ENCODE measurements at regions of chr1 and their contacts with region 1.

Region 1: GRCh38 chr1:100459358-100460114 is 78.4 kb upstream of the GPR88 start:
- DNase-seq: peak; percentile 89
- H3K4me3 Mint-ChIP-seq: no peak overlapping the region
- H3K27ac Mint-ChIP-seq: peak overlapping the region; percentile 22
- H3K4me1 Mint-ChIP-seq: peaks cover 34% of the 10 kb centered on the region
- H3K27me3 Mint-ChIP-seq: no peaks in the 10 kb centered on the region

Region 2: GRCh38 chr1:99808391-99809115 is 651.0 kb before region 1 on chr1:
- intact Hi-C with region 1: loop called (anchors 1 kb)
- DNase-seq: peak; percentile 85
- H3K4me3 Mint-ChIP-seq: peak overlapping the region; percentile 22
- H3K27ac Mint-ChIP-seq: no peak overlapping the region
- H3K4me1 Mint-ChIP-seq: peaks cover 18% of the 10 kb centered on the region
- H3K27me3 Mint-ChIP-seq: peaks cover 20% of the 10 kb centered on the region

Region 3: DNA sequence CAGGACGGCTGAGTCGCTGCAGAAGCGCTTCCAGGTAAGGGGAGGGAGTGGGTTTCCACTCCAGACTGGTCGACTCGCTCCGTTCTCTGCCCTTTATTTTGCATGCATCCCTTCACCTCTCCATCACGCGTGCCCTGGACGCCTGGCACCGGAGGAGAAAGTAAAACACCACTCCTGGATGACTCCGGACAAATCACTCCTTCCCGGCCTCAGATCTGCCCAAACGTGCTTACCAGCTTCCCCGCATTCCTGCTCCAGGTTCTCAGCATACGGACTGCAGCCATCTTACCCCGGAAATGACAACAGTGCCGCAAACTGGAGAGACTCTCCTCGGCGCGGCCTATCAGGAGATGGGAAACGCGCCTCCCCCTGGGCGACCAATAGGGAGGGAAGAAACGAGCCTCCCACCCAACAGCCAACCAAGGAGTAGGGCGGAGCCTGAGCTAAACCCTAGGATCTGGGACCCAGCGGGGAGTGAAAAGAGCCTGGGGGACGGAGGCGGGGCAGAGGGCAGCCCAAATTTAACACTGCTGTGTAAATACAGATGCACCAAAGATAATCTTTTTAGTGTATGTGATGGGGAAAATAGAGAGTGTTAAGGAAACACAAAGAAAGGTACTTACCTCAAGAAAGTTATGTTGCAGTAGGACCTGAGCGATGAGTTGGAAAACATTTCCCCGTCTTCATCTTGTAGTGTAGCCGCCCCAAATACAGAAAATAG is 209.8 kb before region 1 on chr1 and contains the start of gene DBT:
- intact Hi-C with region 1: loop called (anchors 5 kb)
- DNase-seq: peak; percentile 98
- H3K4me3 Mint-ChIP-seq: no peak within 1 kb of the TSS
- H3K27ac Mint-ChIP-seq: no peak within 1 kb of the TSS
- H3K4me1 Mint-ChIP-seq: peaks cover 11% of the 10 kb centered on the region
- H3K27me3 Mint-ChIP-seq: peaks cover 8% of the 10 kb centered on the region
- total RNA-seq, gene DBT: 11.9 and 12.4 TPM in 2 replicates

Region 4: GRCh38 chr1:100279954-100280682 is 179.4 kb before region 1 on chr1:
- intact Hi-C with region 1: loop called (anchors 5 kb)
- DNase-seq: no peak
- H3K4me3 Mint-ChIP-seq: no peak overlapping the region
- H3K27ac Mint-ChIP-seq: no peak overlapping the region
- H3K4me1 Mint-ChIP-seq: peaks cover 22% of the 10 kb centered on the region
- H3K27me3 Mint-ChIP-seq: no peaks in the 10 kb centered on the region

Region 5: DNA sequence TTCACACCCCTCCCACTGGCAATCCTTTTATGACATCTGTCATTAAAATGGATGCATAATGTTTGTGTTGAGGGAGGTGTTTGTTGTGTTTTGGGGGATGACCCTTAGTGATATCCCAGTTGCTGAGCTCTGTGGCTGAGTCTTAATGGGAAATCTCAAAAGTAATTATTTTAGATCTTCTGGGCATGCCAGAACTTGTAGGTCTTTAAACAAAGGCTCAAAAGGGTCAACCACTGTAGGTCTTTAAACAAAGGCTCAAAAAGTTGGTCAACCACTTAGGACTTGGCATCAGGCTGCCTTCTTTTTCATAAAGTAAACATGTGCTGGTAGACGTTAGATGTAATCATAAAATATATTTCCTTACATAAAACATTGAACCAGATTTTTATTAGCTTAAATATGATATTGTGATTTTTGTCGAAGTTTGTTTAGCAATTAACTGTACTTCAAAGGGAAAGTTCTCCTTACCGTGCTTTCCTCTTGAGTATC is 29.2 kb before region 1 on chr1:
- intact Hi-C with region 1: no loop called
- DNase-seq: no peak
- H3K4me3 Mint-ChIP-seq: no peak overlapping the region
- H3K27ac Mint-ChIP-seq: no peak overlapping the region
- H3K4me1 Mint-ChIP-seq: peaks cover 43% of the 10 kb centered on the region
- H3K27me3 Mint-ChIP-seq: no peaks in the 10 kb centered on the region

Region 6: GRCh38 chr1:100866041-100866900 is 406.7 kb after region 1 on chr1:
- intact Hi-C with region 1: loop called (anchors 1 kb)
- DNase-seq: no peak
- H3K4me3 Mint-ChIP-seq: no peak overlapping the region
- H3K27ac Mint-ChIP-seq: no peak overlapping the region
- H3K4me1 Mint-ChIP-seq: no peaks in the 10 kb centered on the region
- H3K27me3 Mint-ChIP-seq: peaks cover 2% of the 10 kb centered on the region

Region 7: GRCh38 chr1:101357444-101357986 is 898.0 kb after region 1 on chr1:
- intact Hi-C with region 1: loop called (anchors 10 kb)
- DNase-seq: peak; percentile 94
- H3K4me3 Mint-ChIP-seq: no peak overlapping the region
- H3K27ac Mint-ChIP-seq: no peak overlapping the region
- H3K4me1 Mint-ChIP-seq: peaks cover 7% of the 10 kb centered on the region
- H3K27me3 Mint-ChIP-seq: peaks cover 36% of the 10 kb centered on the region